GM13977 (cell line): ENCODE measurements at regions of chr19 and their contacts with region 1.

Region 1: GRCh38 chr19:39532233-39533002 is at the start of gene EID2B:
- DNase-seq: peak; percentile 97
- CTCF ChIP-seq: peak; percentile 98

Region 2: DNA sequence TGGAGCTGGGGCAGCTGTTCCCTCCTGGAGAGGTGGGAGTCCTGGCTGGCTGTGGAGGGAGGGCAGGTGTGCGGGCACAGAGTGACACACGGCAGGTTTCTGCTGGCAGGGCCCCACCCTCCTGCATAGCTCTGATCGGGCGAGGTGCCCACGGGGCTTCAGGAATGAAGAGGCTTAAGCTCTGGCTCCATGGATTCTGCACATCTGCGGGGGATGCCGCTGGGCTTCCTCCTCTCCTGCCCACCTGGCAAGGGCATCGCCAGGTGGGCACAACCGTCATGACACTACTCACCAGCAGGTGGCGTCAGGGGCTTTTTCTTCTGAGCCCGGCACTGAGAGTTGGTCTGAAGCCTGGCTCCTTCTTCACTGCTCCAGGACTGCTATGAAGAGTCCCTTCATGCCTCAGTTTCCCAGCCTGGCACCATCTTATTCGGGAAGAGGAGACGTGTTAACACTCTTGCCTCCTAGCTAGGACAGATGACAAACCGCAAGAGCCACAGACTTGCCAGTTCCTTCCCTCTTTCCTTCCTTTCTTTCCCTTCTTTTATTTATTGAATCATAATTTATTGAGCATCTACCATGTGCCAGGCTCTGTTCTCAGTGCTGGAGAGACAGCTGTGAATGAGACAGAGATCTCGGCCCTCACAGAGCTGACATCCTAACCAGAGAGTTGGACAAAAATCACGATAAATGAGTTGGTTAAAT is 422.0 kb before region 1 on chr19:
- in situ Hi-C with region 1: loop called (anchors 25 kb)
- DNase-seq: peak; percentile 85
- CTCF ChIP-seq: peak; percentile 85

Region 3: DNA sequence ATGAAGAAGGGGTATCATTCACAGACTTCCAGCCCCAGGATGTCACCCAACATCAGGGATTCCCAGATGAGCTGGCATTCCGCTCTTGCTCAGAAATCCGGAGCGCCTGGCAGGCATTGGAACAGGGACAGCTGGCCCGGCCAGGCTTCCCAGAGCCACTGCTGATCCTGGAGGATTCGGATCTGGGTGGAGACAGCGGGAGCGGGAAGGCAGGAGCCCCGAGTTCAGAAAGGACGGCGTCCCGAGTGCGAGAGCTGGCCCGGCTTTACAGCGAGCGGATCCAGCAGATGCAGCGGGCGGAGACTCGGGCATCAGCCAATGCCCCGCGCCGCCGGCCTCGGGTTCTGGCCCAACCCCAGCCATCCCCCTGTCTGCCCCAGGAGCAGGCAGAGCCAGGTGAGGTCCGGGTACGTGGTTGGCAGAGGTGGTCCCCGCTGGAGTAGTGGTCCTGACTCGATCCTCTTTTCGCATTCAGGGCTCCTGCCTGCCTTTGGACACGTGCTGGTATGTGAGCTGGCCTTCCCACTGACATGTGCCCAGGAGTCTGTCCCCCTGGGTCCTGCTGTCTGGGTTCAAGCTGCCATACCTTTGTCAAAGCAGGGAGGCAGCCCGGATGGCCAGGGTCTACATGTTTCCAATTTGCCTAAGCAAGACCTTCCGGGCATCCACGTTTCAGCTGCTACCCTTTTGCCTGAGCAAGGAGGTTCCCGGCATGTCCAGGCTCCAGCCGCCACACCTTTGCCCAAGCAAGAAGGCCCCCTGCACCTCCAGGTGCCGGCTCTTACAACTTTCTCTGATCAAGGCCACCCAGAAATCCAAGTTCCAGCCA is 108.9 kb before region 1 on chr19:
- in situ Hi-C with region 1: no loop called
- DNase-seq: no peak
- CTCF ChIP-seq: no peak

Region 4: GRCh38 chr19:39435499-39436349 is 96.7 kb before region 1 on chr19 and contains the start of gene RPS16:
- in situ Hi-C with region 1: loop called (anchors 10 kb)
- DNase-seq: peak; percentile 95
- CTCF ChIP-seq: no peak